ENCODE measurements at regions of chr7 and their contacts with region 1.

Region 1: DNA sequence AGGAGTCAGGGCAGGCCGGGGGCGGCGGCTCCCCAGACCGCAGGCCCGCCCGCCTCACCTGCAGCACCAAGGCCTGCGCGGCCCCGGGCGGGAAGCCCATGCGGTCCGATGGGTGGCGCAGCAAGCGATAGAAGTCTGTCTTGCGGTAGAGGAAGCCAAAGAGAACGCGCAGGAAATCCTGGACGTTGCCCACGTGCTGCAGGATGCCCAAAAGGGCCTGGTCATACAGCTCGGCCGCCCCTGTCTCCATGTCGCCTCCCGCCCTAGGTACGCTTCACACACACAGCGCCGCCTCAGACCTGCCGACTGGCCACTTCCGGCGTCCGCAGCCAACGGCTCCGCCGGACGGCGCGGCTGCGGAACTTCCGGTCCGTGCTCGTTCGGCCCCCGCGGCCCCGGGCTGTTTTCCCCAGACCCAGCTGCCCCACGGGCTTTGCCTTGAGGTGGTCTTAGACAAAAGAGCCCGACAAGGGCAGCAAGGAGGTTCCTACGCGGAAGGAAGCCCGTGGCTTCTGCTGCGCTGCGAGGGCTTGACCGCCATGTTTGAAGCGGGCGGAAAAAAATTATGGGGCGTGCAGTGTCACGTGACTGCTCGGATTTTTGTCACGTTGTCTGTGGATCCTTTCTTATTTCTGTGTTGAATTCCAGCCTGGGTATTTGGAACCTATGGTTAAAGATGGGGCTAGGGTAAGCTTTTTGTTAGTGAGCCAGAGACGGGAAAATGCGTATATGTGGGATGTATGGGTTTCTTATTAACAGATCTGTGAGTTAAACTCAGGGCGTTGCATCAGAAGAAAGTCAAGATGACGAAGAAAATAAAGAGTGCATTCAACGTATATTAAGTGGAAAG is at the start of gene NUDCD3:
- DNase-seq: peak; percentile 87
- H3K4me3 ChIP-seq: peak within 1 kb of the TSS; percentile 68 to 87 (median 83)
- H3K27ac ChIP-seq: peak within 1 kb of the TSS; percentile 97
- H3K4me1 ChIP-seq: peaks cover 19% of the 10 kb centered on the region
- H3K27me3 ChIP-seq: no peaks in the 10 kb centered on the region
- CTCF ChIP-seq: peak in 1 of 2 donors; percentile 32
- total RNA-seq, gene NUDCD3: 77.2 to 122 TPM

Region 2: GRCh38 chr7:44519546-44519945 is 29.0 kb after region 1 on chr7:
- CTCF ChIA-PET with region 1: interaction called, 10 read pairs
- dilution Hi-C with region 1: no loop called
- in situ Hi-C with region 1: no loop called
- intact Hi-C with region 1: no loop called
- DNase-seq: no peak
- H3K4me3 ChIP-seq: no peak overlapping the region
- H3K27ac ChIP-seq: no peak overlapping the region
- H3K4me1 ChIP-seq: peaks cover 7% of the 10 kb centered on the region
- H3K27me3 ChIP-seq: no peaks in the 10 kb centered on the region
- CTCF ChIP-seq: no peak